ENCODE measurements at regions of chr14 and their contacts with region 1.

Region 1: GRCh38 chr14:75794615-75795038 is 133.6 kb downstream of the TTLL5 start:
- DNase-seq: peak in 1 of 2 experiments; percentile 11
- H3K4me3 ChIP-seq: no peak overlapping the region
- H3K27ac ChIP-seq: no peak overlapping the region
- H3K4me1 ChIP-seq: no peaks in the 10 kb centered on the region
- H3K27me3 ChIP-seq: no peaks in the 10 kb centered on the region
- CTCF ChIP-seq: peak; percentile 53

Region 2: GRCh38 chr14:75522224-75522982 is 272.2 kb before region 1 on chr14 and contains the start of gene BATF:
- CTCF ChIA-PET with region 1: no interaction called
- POLR2A ChIA-PET with region 1: no interaction called
- intact Hi-C with region 1: no loop called
- DNase-seq: peak; percentile 69 to 74
- H3K4me3 ChIP-seq: peak within 1 kb of the TSS; percentile 68
- H3K27ac ChIP-seq: peak within 1 kb of the TSS; percentile 93
- H3K4me1 ChIP-seq: peaks cover 60% of the 10 kb centered on the region
- H3K27me3 ChIP-seq: no peaks in the 10 kb centered on the region
- CTCF ChIP-seq: no peak
- total RNA-seq, gene BATF: 55.7 and 79.0 TPM in 2 replicates

Region 3: GRCh38 chr14:75831458-75831857 is 36.8 kb after region 1 on chr14:
- CTCF ChIA-PET with region 1: interaction called, 14 read pairs
- POLR2A ChIA-PET with region 1: no interaction called
- intact Hi-C with region 1: no loop called
- DNase-seq: peak; percentile 93 to 94
- H3K4me3 ChIP-seq: peak overlapping the region; percentile 29; the same call in 1 of the 2 replicates
- H3K27ac ChIP-seq: peak overlapping the region; percentile 86
- H3K4me1 ChIP-seq: peaks cover 42% of the 10 kb centered on the region
- H3K27me3 ChIP-seq: no peaks in the 10 kb centered on the region
- CTCF ChIP-seq: no peak

Region 4: GRCh38 chr14:75906676-75907280 is 112.2 kb after region 1 on chr14:
- CTCF ChIA-PET with region 1: interaction called, 32 read pairs
- POLR2A ChIA-PET with region 1: interaction called, 3 read pairs
- intact Hi-C with region 1: loop called (anchors 2 kb)
- DNase-seq: peak; percentile 60 to 64
- H3K4me3 ChIP-seq: no peak overlapping the region
- H3K27ac ChIP-seq: no peak overlapping the region
- H3K4me1 ChIP-seq: no peaks in the 10 kb centered on the region
- H3K27me3 ChIP-seq: no peaks in the 10 kb centered on the region
- CTCF ChIP-seq: peak; percentile 100

Region 5: GRCh38 chr14:76386915-76387782 is 592.5 kb after region 1 on chr14:
- CTCF ChIA-PET with region 1: no interaction called
- POLR2A ChIA-PET with region 1: no interaction called
- intact Hi-C with region 1: loop called (anchors 2 kb)
- DNase-seq: peak; percentile 55 to 87
- H3K4me3 ChIP-seq: no peak overlapping the region
- H3K27ac ChIP-seq: no peak overlapping the region
- H3K4me1 ChIP-seq: no peaks in the 10 kb centered on the region
- H3K27me3 ChIP-seq: peaks cover 97% of the 10 kb centered on the region
- CTCF ChIP-seq: peak; percentile 100